ENCODE measurements at regions of chr9 and their contacts with region 1.

Region 1: DNA sequence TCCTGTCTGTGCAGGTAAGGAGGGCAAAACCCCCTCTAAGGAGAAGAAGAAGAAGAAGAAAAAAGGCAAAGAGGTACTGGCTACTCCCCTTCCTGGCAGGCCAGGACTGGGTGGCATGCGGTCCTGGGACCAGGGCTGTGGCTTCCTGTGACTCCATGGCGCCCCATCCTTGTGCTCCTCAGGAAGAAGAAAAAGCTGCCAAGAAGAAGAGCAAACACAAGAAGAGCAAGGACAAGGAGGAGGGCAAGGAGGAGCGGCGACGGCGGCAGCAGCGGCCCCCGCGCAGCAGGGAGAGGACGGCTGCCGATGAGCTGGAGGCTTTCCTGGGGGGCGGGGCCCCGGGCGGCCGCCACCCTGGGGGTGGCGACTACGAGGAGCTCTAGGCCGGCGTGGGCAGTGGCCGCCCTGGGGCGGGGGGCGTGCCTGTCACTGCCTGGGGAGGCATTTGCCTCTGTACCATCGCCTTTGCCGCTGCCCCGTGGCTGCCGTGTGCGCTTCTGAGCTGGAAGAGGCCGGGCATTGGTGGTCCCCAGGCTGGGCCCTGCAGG is 2.1 kb upstream of the AJM1 start:
- DNase-seq: no peak
- CTCF ChIP-seq: no peak

Region 2: DNA sequence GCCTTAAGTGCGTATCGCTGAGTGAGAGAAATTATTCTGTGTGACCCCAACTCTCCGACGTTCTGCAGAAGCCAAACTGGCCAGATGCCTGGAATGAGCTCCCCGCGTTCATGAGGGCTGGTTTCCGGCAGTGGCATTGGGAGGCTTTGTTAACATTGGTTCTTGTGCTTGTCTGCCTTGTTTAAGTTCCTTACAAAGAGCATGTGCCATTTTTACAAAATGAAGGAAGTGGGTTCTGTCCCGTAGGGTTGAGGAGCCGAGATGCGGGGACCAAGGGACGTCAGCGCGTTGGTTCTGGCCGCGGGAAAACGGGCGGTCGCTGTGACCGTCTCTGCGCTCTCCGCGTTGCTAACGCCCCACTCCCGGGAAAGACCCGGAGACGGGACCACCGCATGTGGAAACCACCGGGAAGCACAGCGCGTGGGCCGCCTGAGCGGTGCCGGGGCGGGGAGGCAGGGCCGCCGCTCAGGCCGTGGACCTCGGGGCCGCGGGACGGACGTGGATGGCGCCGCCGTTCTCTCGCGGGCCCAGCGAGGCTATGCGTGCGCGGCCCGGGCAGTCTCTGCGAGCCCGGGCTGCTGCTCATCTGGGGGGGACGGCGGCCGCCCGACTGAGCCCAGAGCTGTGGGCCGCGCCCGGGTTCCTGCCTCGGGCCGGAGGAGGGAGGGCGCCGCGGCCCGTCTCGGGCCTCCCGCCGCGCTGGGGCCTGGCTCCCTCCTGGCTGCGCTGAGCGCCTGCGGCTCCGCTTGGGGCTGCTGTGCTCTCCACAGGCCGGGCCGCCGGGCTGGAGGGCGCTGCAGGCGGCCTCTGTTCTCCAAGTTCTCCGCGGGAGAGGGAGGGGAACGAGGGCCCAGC is 19.0 kb before region 1 on chr9:
- CTCF ChIA-PET with region 1: interaction called, 77 read pairs
- POLR2A ChIA-PET with region 1: no interaction called
- DNase-seq: no peak
- CTCF ChIP-seq: no peak

Measured in GM10248 (cell line).